Activated T-helper 2 cell treated with anti-CD3 and anti-CD28 coated beads, Interferon-gamma antibody, Interleukin-2, Interleukin-4, amounts not matched to agents 10 μg/mL and 5 μg/mL and 100 μg/mL, durations not matched to agents 14 hours and 24 hours and 36 hours (primary cell): ENCODE measurements at regions of chr1 and their contacts with region 1.

Region 1: GRCh38 chr1:95043141-95043980 is 29.4 kb downstream of the ALG14 start:
- DNase-seq: peak; percentile 66
- H3K4me3 Mint-ChIP-seq: no peak overlapping the region
- H3K27ac Mint-ChIP-seq: no peak overlapping the region
- H3K4me1 Mint-ChIP-seq: no peaks in the 10 kb centered on the region
- H3K27me3 Mint-ChIP-seq: no peaks in the 10 kb centered on the region

Region 2: DNA sequence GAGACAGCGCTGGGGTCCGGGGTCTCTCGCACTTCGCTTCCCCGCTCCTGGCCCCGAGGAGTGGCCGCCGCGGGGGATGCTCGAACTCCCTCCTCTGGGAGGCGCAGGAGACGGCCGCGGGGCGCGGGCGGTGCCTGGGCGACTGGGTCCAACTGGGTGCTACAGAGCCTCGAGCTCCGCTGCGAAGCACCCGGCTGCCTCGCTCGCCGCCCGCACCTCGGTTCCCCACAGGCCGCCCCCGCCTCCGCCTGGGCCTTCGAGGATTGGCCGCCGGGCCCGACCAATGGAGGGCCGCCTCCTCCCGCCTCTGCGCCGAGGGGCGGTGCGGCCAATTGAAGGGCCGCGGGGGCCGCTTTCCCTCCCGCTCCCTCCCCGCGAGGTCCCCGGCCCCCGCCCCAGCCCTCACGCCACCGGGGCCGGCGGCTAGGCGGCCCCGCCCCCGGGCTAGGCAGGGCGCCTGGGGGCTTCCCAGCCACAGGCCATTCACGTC is 116.4 kb before region 1 on chr1 and contains the start of gene CNN3:
- intact Hi-C with region 1: loop called (anchors 5 kb)
- DNase-seq: peak; percentile 52
- H3K4me3 Mint-ChIP-seq: peak within 1 kb of the TSS; percentile 80
- H3K27ac Mint-ChIP-seq: no peak within 1 kb of the TSS
- H3K4me1 Mint-ChIP-seq: peaks cover 15% of the 10 kb centered on the region
- H3K27me3 Mint-ChIP-seq: peaks cover 50% of the 10 kb centered on the region
- total RNA-seq, gene CNN3: 2.6 and 2.7 TPM in 2 replicates